Psoas muscle (tissue), 8 donors: ENCODE measurements at regions of chr12 and their contacts with region 1.

Region 1: GRCh38 chr12:27523642-27524493 is at the start of gene PPFIBP1:
- DNase-seq: peak; percentile 99
- ATAC-seq: peak; percentile 99 to 100 (median 99)
- H3K4me3 ChIP-seq: peak within 1 kb of the TSS; percentile 94
- H3K27ac ChIP-seq: peak within 1 kb of the TSS; percentile 94
- H3K4me1 ChIP-seq: peaks cover 8% of the 10 kb centered on the region
- H3K27me3 ChIP-seq: no peaks in the 10 kb centered on the region
- CTCF ChIP-seq: peak; percentile 32
- total RNA-seq, gene PPFIBP1: 28.3 to 63.1 (median 29.6) TPM

Region 2: GRCh38 chr12:27434673-27435565 is 88.9 kb before region 1 on chr12:
- intact Hi-C with region 1: loop called (anchors 1 to 10 kb)
- DNase-seq: peak in 1 of 2 donors; percentile 10
- ATAC-seq: peak in 2 of 4 donors; percentile 53 to 73
- H3K4me3 ChIP-seq: no peak overlapping the region
- H3K27ac ChIP-seq: no peak overlapping the region
- H3K4me1 ChIP-seq: no peaks in the 10 kb centered on the region
- H3K27me3 ChIP-seq: peaks cover 0 to under 1% (median 0%) of the 10 kb centered on the region in 3 donors
- CTCF ChIP-seq: peak; percentile 40

Region 3: DNA sequence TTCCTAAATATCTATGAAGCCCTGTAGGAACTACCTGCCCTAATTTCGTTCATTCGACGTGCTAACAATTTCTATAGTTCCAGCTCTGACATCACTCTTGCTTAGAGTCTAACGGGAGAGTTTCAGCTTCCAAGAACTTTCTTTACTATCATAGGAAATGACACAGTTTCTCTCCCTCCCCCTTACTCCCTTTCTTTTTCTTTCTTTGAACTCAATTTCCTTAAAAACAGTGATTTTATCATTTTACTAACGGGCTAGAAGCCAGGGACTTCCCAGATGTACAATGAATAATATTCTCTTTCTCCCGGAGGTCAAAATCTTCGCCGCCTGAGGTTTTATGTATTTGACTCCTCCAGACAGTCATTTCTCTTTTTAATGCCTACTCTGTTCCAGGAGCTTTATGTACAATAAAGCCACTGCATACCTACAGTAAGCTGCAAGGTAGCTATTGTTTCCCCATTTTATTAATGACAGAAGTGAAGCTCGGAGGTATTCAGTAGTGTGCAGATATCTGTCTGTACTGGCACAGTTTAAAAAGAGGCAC is 61.6 kb before region 1 on chr12:
- intact Hi-C with region 1: no loop called
- DNase-seq: no peak
- ATAC-seq: no peak
- H3K4me3 ChIP-seq: no peak overlapping the region
- H3K27ac ChIP-seq: no peak overlapping the region
- H3K4me1 ChIP-seq: no peaks in the 10 kb centered on the region
- H3K27me3 ChIP-seq: peaks cover 0 to 4% (median 0%) of the 10 kb centered on the region in 3 donors
- CTCF ChIP-seq: no peak

Region 4: DNA sequence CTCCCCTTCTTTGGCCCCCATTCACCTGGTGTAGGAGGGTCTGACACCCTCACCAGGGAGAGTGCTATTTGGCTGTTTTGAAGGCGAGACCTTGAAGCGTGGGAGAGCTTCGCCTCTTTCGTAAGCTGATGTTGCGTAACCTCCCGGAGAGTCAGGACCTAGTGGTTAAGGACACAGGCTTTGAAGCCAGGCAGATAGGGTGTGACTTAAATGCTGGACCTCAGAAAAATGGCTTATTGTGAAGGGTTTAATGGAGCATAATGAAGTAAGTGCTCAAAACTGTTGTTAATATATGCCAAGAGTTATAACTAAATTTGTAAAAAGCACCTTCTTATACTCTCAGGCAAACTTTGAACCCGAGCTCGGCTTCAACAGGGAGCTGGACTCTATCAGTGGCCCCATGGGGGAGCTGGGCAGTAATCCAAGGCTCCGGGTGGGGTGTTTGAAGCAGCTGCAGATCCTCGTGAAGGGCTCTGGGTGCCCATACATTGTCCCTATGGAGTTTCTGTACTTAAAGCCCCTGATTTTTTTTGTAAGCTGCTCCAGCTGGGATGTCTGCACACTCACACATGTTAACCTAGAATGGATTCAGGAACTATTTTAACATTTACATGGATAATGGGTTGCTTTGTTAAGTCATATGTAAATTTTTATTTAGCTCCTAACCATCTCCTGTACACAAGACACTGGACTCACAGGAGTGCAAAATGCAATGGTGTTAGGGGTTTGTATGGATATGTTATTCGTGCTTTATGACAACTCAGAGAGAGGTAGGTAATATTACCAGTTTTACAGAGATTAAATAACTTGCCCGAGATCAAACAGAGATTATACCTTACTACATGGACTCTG is 26.2 kb after region 1 on chr12:
- intact Hi-C with region 1: no loop called
- DNase-seq: peak; percentile 81 to 83
- ATAC-seq: peak; percentile 79 to 89 (median 86)
- H3K4me3 ChIP-seq: peak overlapping the region; percentile 44
- H3K27ac ChIP-seq: peak overlapping the region; percentile 76
- H3K4me1 ChIP-seq: peaks cover 85% of the 10 kb centered on the region
- H3K27me3 ChIP-seq: no peaks in the 10 kb centered on the region
- CTCF ChIP-seq: no peak

Region 5: GRCh38 chr12:27564612-27565213 is 40.8 kb after region 1 on chr12:
- intact Hi-C with region 1: loop called (anchors 5 kb)
- DNase-seq: no peak
- ATAC-seq: no peak
- H3K4me3 ChIP-seq: no peak overlapping the region
- H3K27ac ChIP-seq: no peak overlapping the region
- H3K4me1 ChIP-seq: peaks cover 19% of the 10 kb centered on the region
- H3K27me3 ChIP-seq: no peaks in the 10 kb centered on the region
- CTCF ChIP-seq: no peak

Region 6: DNA sequence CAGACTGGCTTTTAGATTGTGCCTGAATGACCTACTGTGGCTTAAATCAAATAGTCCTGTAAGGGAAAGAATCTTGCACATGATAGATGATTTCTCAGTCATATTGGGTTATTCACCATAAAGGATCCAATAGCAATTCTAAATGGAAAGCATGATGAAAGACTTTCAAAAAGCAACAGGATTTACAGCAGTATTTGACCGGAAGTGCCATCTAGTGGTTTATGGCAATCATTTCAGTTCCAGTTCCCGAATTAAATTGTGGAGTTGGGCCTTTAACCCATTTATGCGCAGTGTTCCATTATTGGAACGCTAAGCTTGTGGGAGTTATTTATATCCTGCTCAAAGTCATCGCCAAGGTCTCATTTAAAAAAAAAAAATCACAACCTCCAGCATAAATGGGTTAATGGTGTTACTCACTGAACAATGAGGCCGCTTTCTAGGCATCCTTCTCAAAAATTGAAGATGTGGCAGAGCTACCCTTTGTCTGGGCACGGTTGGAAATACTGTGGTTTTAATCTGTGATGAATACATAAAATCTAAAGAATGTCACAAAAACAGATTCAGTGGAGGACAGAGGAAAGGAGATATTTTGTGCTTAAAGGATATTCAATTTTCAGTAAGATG is 111.6 kb after region 1 on chr12:
- intact Hi-C with region 1: loop called in 1 of 2 experiments (anchors 10 kb)
- DNase-seq: no peak
- ATAC-seq: peak in 3 of 4 donors; percentile 37 to 65 (median 39)
- H3K4me3 ChIP-seq: no peak overlapping the region
- H3K27ac ChIP-seq: no peak overlapping the region
- H3K4me1 ChIP-seq: peaks cover 16% of the 10 kb centered on the region
- H3K27me3 ChIP-seq: no peaks in the 10 kb centered on the region
- CTCF ChIP-seq: peak; percentile 66

Region 7: GRCh38 chr12:27652174-27652763 is 128.4 kb after region 1 on chr12:
- intact Hi-C with region 1: loop called in 1 of 2 experiments (anchors 5 kb)
- DNase-seq: no peak
- ATAC-seq: peak; percentile 69 to 91 (median 80)
- H3K4me3 ChIP-seq: no peak overlapping the region
- H3K27ac ChIP-seq: no peak overlapping the region
- H3K4me1 ChIP-seq: no peaks in the 10 kb centered on the region
- H3K27me3 ChIP-seq: no peaks in the 10 kb centered on the region
- CTCF ChIP-seq: peak; percentile 90